Activated CD4-positive, alpha-beta T cell treated with anti-CD3 and anti-CD28 coated beads for 36 hours (primary cell): ENCODE measurements at regions of chr19 and their contacts with region 1.

Region 1: GRCh38 chr19:10835754-10836477 is at the start of gene TMED1:
- DNase-seq: peak; percentile 99
- ATAC-seq: peak; percentile 93
- H3K4me3 Mint-ChIP-seq: peak within 1 kb of the TSS; percentile 94
- H3K27ac Mint-ChIP-seq: peak within 1 kb of the TSS; percentile 99
- H3K4me1 Mint-ChIP-seq: peaks cover 15% of the 10 kb centered on the region
- H3K27me3 Mint-ChIP-seq: no peaks in the 10 kb centered on the region
- total RNA-seq, gene TMED1: 8.7 to 15.3 TPM

Region 2: DNA sequence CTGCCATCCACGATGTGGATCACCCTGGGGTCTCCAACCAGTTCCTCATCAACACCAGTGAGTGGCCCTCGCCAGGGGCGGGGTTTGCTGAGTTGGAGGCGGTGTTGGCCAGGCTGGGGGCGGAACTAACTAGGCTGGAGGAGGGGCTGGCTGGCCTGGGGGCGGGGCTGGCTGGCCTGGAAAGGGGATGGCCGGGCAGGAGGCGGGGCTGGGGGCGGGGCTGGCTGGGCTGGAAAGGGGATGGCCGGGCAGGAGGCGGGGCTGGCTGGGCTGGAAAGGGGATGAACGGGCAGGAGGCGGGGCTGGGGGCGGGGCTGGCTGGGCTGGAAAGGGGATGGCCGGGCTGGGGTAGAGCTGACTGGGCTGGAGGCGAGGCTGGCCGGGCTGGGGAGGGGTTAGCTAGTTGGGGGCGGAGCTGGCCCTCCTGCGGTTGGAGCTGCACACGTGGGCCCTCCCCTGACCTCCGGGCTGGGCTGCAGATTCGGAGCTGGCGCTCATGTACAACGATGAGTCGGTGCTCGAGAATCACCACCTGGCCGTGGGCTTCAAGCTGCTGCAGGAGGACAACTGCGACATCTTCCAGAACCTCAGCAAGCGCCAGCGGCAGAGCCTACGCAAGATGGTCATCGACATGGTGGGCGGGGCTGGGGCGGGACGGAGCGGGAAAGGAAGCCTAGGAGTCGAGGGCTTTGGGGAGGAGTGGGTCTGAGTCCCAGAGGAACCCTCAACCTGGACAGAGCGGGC is 374.7 kb before region 1 on chr19:
- CTCF ChIA-PET with region 1: no interaction called
- POLR2A ChIA-PET with region 1: no interaction called
- intact Hi-C with region 1: loop called in 1 of 2 experiments (anchors 1 kb)
- DNase-seq: peak; percentile 98
- ATAC-seq: peak; percentile 98
- H3K4me3 Mint-ChIP-seq: peak overlapping the region; percentile 43
- H3K27ac Mint-ChIP-seq: no peak overlapping the region
- H3K4me1 Mint-ChIP-seq: peaks cover 9% of the 10 kb centered on the region
- H3K27me3 Mint-ChIP-seq: peaks cover 3% of the 10 kb centered on the region

Region 3: GRCh38 chr19:10602330-10603083 is 233.4 kb before region 1 on chr19:
- CTCF ChIA-PET with region 1: interaction called, 3 read pairs
- POLR2A ChIA-PET with region 1: interaction called, 4 read pairs
- intact Hi-C with region 1: loop called in 1 of 2 experiments (anchors 1 kb)
- DNase-seq: peak; percentile 95
- ATAC-seq: peak; percentile 84
- H3K4me3 Mint-ChIP-seq: peak overlapping the region; percentile 95
- H3K27ac Mint-ChIP-seq: peak overlapping the region; percentile 99
- H3K4me1 Mint-ChIP-seq: peaks cover 24% of the 10 kb centered on the region
- H3K27me3 Mint-ChIP-seq: no peaks in the 10 kb centered on the region

Region 4: GRCh38 chr19:10797541-10798256 is 38.2 kb before region 1 on chr19:
- CTCF ChIA-PET with region 1: interaction called, 3 read pairs
- POLR2A ChIA-PET with region 1: no interaction called
- intact Hi-C with region 1: loop called in 1 of 2 experiments (anchors 1 kb)
- DNase-seq: peak; percentile 95
- ATAC-seq: peak; percentile 94
- H3K4me3 Mint-ChIP-seq: peak overlapping the region; percentile 68
- H3K27ac Mint-ChIP-seq: peak overlapping the region; percentile 97
- H3K4me1 Mint-ChIP-seq: peaks cover 36% of the 10 kb centered on the region
- H3K27me3 Mint-ChIP-seq: no peaks in the 10 kb centered on the region

Region 5: DNA sequence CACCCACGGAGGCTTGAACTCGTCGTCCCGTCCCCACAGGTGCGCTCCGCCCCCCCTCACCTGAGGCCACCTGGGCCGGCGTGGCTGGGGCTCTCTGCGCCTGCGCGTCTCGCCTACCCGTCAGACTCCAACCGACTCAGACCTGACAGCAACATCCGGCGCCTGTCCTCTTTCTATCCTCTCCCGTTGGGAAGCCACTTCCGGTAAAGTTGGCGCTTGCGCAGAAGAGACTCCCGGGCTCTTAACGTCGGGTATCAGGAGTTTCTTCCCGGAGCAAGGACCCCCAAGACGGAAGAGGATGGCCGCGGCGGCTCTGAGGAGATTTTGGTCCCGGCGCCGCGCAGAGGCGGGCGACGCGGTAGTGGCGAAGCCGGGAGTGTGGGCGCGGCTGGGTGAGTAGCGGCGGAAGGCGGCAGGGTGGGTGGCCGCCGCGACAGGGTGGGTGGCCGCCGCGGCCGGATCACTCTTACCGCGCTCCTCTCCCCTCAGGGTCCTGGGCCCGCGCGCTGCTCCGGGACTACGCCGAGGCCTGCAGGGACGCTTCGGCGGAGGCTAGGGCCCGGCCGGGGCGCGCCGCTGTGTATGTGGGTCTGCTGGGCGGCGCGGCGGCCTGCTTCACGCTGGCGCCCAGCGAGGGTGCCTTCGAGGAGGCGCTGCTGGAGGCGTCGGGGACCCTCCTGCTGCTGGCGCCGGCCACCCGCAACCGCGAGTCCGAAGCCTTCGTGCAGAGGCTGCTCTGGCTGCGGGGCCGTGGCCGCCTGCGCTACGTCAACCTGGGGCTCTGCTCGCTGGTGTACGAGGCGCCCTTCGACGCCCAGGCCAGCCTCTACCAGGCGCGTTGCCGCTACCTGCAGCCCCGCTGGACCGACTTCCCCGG is 92.8 kb after region 1 on chr19 and contains the starts of genes TIMM29 and YIPF2:
- CTCF ChIA-PET with region 1: interaction called, 3 read pairs
- POLR2A ChIA-PET with region 1: no interaction called
- intact Hi-C with region 1: loop called in 1 of 2 experiments (anchors 1 kb)
- DNase-seq: peak; percentile 97
- ATAC-seq: peak; percentile 96
- H3K4me3 Mint-ChIP-seq: peak within 1 kb of the TSS; percentile 90
- H3K27ac Mint-ChIP-seq: peak within 1 kb of the TSS; percentile 79
- H3K4me1 Mint-ChIP-seq: peaks cover 21% of the 10 kb centered on the region
- H3K27me3 Mint-ChIP-seq: no peaks in the 10 kb centered on the region
- total RNA-seq, gene TIMM29: 8.6 to 15.5 TPM
- total RNA-seq, gene YIPF2: 15.8 to 21.3 TPM

Region 6: DNA sequence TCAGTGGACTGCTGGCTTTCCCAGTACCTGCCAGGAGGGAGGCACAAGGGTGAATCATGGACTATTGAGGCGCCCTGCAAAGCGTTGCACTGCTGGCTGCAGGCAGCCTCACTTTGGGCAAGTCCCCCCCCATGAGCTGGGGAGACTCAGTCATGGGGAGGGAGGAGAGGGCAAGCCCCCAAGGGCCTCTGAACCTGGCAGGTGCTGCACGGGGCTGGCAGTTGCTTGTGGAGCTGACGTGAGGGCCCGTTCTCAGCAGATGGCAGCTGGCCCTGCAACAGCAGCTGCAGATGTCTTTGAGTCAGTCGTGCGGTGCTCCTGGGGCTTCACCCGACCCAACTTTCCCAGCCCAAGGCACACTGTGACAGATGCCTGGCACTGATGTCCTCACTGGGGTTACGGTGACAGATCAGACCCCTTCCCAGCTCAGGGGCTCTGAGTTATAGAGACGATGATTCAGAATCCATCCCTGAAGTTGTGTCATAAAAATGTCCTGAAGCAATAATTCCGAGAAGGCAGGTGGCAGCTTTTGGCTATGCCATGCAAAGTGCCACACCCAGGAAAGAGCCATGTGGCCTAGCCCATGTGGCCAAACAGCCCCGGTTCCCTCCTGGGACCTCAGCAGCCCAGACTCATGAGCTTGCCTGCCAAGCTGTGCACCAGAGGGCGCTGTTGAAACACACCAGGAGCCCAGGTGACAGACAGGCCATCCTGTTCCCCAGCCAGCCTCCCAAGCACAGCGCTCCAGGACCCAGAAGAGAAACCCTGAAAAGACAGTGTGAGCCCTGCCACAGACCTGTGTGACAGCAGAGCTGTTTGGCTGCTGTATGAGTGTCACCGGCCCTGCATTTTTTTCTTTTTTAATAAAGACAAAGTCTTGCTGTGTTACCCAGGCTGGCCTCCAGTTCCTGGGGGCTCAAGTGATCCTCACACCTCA is 199.8 kb after region 1 on chr19:
- CTCF ChIA-PET with region 1: no interaction called
- POLR2A ChIA-PET with region 1: no interaction called
- intact Hi-C with region 1: no loop called
- DNase-seq: peak; percentile 94
- ATAC-seq: peak; percentile 99
- H3K4me3 Mint-ChIP-seq: no peak overlapping the region
- H3K27ac Mint-ChIP-seq: peak overlapping the region; percentile 9
- H3K4me1 Mint-ChIP-seq: peaks cover 6% of the 10 kb centered on the region
- H3K27me3 Mint-ChIP-seq: no peaks in the 10 kb centered on the region